Cardiac septum (tissue), 1 donor: ENCODE measurements at regions of chr21 and their contacts with region 1.

Region 1: DNA sequence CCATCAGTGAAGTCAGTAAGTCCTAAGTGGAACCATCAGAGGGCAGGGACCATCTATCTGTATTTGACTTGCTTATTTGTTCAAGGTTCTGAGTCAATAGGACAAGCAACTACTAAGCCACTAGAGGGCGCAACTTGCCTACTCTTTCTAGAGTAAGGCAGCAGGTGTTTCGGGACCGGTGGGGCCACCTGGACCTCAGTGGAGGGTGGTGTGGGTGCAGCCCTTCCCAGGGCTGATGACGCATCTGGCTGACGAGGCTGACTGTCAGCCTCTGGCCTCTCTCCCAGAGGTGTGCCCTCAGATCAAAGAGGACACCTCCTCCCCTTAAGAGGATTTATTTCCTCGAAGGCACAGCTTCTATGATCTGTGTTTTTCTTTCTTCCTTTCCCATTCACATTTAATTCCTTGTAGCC is 6.6 kb downstream of the CBR3 start:
- DNase-seq: peak; percentile 81

Region 2: DNA sequence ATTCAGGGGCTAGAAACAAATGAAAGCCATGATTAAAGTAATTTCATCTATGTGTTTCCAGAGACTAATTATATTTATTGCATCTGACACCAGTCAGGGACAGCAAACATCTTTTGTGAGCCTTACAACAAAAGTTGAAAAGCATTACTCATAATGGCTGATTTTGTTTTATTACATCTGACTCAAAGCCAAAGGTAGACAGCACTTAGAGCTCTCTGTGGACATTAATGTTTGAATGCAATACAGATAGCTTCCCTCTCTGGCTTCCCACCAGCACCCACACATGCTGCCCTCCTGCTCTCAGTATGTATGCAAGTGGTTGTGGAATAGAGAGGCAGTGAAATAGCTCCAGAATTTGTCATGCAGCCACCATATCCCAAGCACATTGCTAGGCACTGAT is 279.9 kb before region 1 on chr21:
- intact Hi-C with region 1: no loop called
- DNase-seq: no peak

Region 3: DNA sequence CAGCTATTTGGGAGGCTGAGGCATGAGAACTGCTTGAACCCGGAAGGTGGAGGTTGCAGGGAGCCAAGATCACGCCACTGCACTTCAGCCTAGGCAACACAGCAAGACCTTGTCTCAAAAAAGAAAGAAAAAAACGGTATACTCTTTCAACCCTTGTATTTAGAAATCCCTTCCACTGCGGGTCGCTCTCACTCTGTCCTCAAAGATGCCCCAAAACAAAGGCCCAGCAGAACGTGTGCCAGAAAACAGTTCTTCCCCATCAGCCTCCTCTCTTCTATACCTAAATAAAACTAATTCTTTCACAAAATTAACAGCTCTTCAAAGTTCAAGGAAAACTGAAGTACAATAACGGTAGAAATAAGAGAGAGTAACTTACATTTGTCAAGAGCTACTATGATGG is 94.4 kb before region 1 on chr21:
- intact Hi-C with region 1: no loop called
- DNase-seq: no peak

Region 4: GRCh38 chr21:36209626-36210171 is 68.2 kb after region 1 on chr21:
- intact Hi-C with region 1: loop called (anchors 5 kb)
- DNase-seq: no peak

Region 5: DNA sequence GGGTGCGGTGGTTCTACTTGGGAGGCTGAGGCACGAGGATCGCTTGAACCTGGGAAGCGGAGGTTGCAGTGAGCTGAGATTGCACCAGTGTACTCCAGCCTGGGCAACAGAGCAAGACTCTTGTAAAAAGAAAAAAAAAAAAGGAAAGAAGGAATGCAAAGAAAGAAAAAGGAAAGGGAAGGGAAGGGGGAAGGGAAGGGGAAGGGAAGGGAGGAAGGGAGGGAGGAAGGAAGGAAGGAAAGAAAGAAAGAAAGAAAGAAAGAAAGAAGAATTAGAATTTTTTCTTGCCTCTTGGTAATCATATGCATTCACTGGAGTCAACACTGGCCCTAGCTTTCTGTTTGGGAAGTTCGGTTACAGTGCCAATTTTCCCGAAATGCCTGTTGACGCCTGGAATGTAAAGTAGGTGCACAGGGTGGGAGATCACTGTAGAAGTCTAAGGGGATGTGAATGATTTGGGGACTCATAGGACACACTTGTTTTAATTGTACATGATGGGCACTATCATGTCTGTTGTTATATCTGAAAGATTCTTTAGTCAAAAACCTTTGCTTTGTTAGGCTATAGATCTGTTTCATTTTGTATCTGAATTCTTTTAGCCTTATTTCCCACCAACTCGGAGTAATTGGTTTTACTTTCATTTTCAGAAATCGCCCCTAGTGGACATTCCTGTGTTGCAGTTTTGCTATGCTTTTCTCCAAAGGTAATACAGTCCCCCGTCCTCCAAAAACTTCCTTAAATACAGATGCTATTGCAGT is 118.7 kb after region 1 on chr21:
- intact Hi-C with region 1: loop called (anchors 5 kb)
- DNase-seq: no peak

Region 6: DNA sequence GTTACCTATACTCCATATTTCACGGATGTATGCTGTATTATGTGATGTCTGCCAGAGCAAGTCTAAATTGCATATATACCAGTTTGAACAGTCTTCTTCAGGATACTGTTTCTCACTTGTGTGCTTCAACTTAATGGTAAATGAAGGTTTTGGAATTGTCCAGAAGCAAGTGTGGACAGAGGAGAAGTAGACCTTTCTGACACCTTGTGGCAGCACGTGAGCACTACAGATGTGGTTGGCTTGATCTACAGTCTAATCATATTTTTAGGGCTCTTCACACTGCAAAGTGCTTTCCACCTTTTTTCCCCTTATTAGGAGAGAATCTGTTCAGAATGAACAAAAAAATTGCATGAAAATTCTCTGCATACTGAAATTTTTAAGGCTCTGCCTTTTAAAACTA is 189.4 kb after region 1 on chr21:
- intact Hi-C with region 1: loop called (anchors 2 kb)
- DNase-seq: no peak

Region 7: DNA sequence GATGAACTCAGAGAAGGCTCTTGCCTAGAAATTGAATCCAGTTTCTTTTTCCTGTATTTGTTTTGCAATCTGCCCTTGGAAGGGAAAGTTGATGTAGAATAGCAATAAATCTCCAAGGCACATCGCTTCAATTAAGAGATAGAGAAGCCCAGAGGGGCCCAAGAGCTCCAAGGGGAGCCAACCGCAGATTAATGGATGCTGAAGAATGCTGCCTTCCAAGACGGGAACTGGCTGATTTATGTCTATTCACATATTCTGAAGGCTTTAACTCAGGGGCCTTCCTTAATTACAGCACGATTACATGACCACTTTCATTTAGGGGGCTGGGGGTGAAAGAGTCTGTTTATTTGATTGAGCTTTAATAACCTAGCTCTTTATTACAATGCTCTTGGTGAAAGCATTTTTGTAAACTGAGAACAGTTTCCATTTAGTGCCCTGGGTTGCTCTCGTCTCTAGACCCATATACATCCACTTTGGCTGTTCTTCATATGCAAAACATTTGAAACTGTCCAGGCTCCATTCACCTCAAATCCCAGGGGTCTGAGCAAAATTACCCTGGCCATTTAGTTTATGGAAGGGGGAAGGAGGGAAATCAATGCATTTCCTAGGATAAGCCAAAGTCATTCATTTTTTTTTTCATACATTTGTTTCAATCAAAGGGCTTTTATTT is 425.8 kb after region 1 on chr21:
- intact Hi-C with region 1: no loop called
- DNase-seq: no peak